ENCODE measurements at regions of chr3 and their contacts with region 1.

Region 1: DNA sequence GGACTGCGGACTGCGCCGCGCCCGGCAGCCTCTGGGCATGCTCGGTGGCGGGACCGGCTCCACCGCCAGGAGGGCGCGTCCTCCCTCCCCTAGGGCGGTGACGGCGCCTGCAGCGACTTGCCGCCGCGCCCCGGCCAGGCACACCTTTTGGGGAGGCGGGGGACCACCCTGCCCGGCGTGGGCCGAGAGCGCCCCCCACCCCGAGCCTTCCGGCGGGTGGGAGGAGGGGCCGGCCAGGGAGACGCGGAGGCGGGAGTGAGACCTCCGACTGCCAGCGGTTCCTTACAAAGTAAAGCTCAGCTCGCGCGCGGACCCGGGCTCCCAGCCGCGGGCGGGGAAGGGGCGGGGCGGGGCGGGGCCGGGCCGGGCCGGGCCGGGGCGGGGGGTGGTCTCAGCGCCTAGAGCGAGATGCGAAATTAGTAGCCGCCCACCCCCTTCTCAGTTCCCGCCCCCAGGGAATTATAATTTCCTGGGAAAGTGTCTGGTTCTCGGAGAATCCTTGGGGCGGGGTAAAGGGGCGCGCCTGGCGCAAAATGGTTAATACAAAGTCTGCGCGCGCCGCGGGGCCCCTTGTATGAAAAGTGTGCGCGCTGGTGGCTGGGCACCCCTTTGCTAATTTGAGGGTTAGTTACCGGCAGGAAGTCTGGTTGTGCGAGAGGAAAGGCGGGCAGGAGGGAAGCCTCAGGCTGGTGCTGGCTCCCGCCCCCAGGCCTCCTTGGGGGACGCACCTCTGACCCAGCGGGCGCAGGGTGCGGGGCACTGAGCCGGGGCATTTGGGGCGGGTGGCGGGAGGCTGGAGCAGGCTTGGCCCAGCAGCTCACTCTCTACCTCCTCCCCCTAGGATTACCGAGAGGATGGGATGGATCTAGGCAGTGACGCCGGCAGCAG is 224.8 kb upstream of the IL12A start:
- DNase-seq: peak; percentile 90
- H3K4me3 ChIP-seq: peak overlapping the region; percentile 80 to 91 (median 86)
- H3K27ac ChIP-seq: peak overlapping the region; percentile 97 to 100 (median 100)
- H3K4me1 ChIP-seq: peaks cover 0 to 54% (median 49%) of the 10 kb centered on the region in 4 donors
- H3K27me3 ChIP-seq: no peaks in the 10 kb centered on the region
- CTCF ChIP-seq: peak; percentile 18 to 69 (median 44)
- EP300 ChIP-seq: no peak
- POLR2A ChIP-seq: peak; percentile 27 to 66

Region 2: GRCh38 chr3:159616212-159616825 is 147.5 kb before region 1 on chr3:
- intact Hi-C with region 1: loop called (anchors 5 kb)
- DNase-seq: no peak
- H3K4me3 ChIP-seq: no peak overlapping the region
- H3K27ac ChIP-seq: no peak overlapping the region
- H3K4me1 ChIP-seq: peaks cover 0 to 8% (median 3%) of the 10 kb centered on the region in 4 donors
- H3K27me3 ChIP-seq: no peaks in the 10 kb centered on the region
- CTCF ChIP-seq: peak; percentile 56 to 77 (median 64)
- EP300 ChIP-seq: no peak
- POLR2A ChIP-seq: no peak

Region 3: GRCh38 chr3:159798951-159799350 is 35.1 kb after region 1 on chr3:
- intact Hi-C with region 1: loop called (anchors 2 kb)
- DNase-seq: no peak
- H3K4me3 ChIP-seq: no peak overlapping the region
- H3K27ac ChIP-seq: peak overlapping the region; percentile 82 to 90 (median 86)
- H3K4me1 ChIP-seq: peaks cover 0 to 100% (median 89%) of the 10 kb centered on the region in 4 donors
- H3K27me3 ChIP-seq: no peaks in the 10 kb centered on the region
- CTCF ChIP-seq: no peak
- EP300 ChIP-seq: no peak
- POLR2A ChIP-seq: no peak

Region 4: DNA sequence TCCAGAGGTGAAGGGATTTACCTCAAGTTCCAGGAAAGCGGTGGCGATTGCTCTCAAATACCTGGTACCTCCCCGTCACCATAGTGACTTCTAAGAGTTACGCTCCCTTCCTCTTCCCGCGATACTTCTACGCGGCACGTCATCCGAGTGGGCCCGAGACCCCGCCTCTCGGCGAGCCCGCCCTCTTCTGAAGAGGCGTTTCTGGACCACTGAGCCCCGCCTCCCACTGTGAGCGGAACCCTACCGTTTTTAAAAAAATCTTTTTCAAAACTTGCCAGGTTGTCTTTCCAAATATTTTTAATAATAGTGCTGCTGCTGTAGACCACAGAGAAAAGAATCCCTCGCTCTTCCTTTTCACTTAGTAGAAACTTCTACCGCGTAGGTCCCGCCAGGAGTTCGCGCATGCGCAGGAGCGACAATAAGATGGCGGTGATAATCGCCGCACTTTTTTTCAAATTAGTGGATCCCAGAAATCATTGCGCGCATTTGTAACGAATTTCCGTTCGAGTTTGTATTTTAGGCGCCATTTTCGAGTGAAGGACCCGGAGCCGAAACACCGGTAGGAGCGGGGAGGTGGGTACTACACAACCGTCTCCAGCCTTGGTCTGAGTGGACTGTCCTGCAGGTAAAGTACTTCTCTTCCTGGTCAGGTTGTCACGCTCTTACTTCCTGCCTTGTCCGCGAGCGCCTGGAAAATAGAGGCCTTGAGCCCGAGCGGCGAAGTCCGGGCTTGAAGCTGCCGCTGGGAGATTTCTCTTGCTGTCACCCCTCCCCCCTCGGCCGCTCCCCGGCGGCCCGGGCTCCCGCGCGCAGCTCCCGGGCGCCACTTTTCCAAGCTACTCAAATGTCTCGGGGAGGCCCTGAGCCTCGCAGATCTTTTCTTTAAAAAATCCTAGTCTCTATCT is 635.5 kb after region 1 on chr3 and contains the starts of genes IFT80 and SMC4:
- intact Hi-C with region 1: loop called (anchors 10 kb)
- DNase-seq: peak; percentile 98
- H3K4me3 ChIP-seq: peak within 1 kb of the TSS; percentile 61 to 76 (median 68)
- H3K27ac ChIP-seq: peak within 1 kb of the TSS; percentile 84 to 90 (median 86)
- H3K4me1 ChIP-seq: peaks cover 0 to 26% (median 19%) of the 10 kb centered on the region in 4 donors
- H3K27me3 ChIP-seq: peaks cover 0 to 36% (median 15%) of the 10 kb centered on the region in 3 donors
- CTCF ChIP-seq: peak in 1 of 4 experiments; percentile 14
- EP300 ChIP-seq: no peak
- POLR2A ChIP-seq: no peak
- total RNA-seq, gene IFT80: 15.0 to 22.8 (median 17.2) TPM
- total RNA-seq, gene SMC4: 25.1 to 44.6 (median 31.3) TPM

Measured in sigmoid colon (tissue), 7 donors.